ENCODE measurements at regions of chr1 and their contacts with region 1.

Region 1: DNA sequence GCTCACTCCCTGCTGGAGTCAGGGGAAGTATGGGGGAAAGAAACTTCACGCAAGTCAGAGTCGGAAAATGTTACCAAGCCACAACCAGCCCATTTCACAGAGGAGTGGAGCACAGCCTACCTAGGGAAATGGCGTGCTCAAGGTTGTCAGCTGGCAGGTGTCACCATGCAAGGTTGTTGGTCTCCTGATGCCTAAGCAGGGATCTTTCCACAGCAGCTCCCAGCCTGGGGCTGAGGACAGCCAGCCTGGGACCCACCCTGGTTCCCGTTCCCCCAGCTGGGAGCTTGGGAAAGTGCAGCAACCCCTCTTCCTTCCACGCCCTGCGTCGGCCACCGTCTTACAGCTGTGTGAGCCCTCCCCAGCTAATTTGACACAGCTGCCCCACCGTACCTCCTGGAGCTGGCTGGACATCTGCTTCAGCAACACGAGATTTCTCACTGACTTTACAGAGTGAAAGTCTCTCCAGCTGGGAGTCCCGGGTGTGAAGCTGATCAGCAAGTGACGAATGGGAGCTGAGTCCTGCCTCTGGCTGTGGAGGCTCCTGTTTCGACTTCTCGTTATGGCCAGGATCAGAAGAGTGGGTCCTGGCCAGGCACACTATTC is 224.6 kb upstream of the RAB4A start:
- DNase-seq: no peak
- ATAC-seq: no peak
- H3K4me3 ChIP-seq: no peak overlapping the region
- H3K27ac ChIP-seq: no peak overlapping the region
- H3K4me1 ChIP-seq: no peaks in the 10 kb centered on the region
- H3K27me3 ChIP-seq: peaks cover 10% of the 10 kb centered on the region; the same call in 1 of the 2 replicates
- CTCF ChIP-seq: no peak
- POLR2A ChIP-seq: no peak
- RAD21 ChIP-seq: no peak

Region 2: GRCh38 chr1:229080361-229080760 is 34.0 kb after region 1 on chr1:
- CTCF ChIA-PET with region 1: no interaction called
- POLR2A ChIA-PET with region 1: no interaction called
- dilution Hi-C with region 1: no loop called
- in situ Hi-C with region 1: no loop called
- intact Hi-C with region 1: loop called (anchors 5 kb)
- DNase-seq: no peak
- ATAC-seq: no peak
- H3K4me3 ChIP-seq: no peak overlapping the region
- H3K27ac ChIP-seq: no peak overlapping the region
- H3K4me1 ChIP-seq: no peaks in the 10 kb centered on the region
- H3K27me3 ChIP-seq: peaks cover 17% of the 10 kb centered on the region
- CTCF ChIP-seq: no peak
- POLR2A ChIP-seq: no peak
- RAD21 ChIP-seq: no peak

Measured in IMR-90 (cell line).